PC-9 (cell line): ENCODE measurements at regions of chr21 and their contacts with region 1.

Region 1: GRCh38 chr21:27371115-27371974 is 404.5 kb upstream of the ADAMTS5 start:
- DNase-seq: no peak
- H3K4me3 ChIP-seq: no peak overlapping the region
- H3K27ac ChIP-seq: no peak overlapping the region
- H3K4me1 ChIP-seq: no peaks in the 10 kb centered on the region
- H3K27me3 ChIP-seq: no peaks in the 10 kb centered on the region
- CTCF ChIP-seq: no peak

Region 2: GRCh38 chr21:27359141-27359540 is 12.2 kb before region 1 on chr21:
- CTCF ChIA-PET with region 1: interaction called, 12 read pairs
- POLR2A ChIA-PET with region 1: no interaction called
- intact Hi-C with region 1: no loop called
- DNase-seq: no peak
- H3K4me3 ChIP-seq: no peak overlapping the region
- H3K27ac ChIP-seq: no peak overlapping the region
- H3K4me1 ChIP-seq: no peaks in the 10 kb centered on the region
- H3K27me3 ChIP-seq: no peaks in the 10 kb centered on the region
- CTCF ChIP-seq: no peak